ENCODE measurements at regions of chr17 and their contacts with region 1.

Region 1: DNA sequence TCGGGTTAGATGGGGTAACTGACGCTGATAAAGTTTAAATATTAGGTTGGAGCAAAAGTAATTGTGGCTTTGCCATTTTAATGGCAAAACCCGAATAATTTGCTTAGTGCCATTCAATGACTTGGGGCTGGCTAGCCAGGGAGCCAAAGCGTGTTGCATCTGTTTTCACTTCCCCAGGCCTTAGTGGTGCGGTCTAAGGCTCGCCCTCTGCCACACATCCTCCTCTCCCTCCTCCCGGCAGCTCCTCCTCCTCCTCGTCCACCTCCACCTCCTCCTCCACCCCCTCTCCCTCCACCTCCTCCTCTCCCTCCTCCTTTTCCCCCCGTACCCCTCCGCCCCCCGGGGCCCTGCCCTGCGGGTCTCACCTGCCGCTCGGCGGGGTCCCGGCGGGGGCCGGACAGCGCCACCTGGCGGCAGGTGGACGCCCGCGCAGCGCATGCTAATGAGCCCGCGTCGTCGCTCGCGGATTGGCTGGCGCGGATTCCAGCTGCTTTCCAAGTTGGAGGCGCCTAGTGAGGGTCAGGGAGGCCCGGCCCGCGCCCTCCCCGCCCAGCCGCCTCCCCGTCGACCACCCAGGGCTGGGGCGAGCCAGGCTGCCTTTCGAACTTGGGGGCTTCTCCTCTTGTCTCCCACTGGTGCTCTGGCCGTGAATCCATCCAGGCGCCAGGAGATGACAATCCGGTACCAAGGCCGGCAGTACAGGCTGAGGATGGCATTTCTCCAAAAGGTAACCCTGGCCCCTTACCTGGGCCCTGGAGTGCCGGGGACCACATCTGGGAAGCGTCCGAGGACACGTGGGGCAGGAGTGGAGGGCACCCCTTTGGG is 36.6 kb upstream of the RGS9 start:
- DNase-seq: no peak
- H3K4me3 ChIP-seq: peak overlapping the region; percentile 43
- H3K27me3 ChIP-seq: no peaks in the 10 kb centered on the region
- CTCF ChIP-seq: peak; percentile 71

Region 2: GRCh38 chr17:65056262-65056638 is 44.3 kb before region 1 on chr17:
- CTCF ChIA-PET with region 1: interaction called, 10 read pairs
- POLR2A ChIA-PET with region 1: interaction called, 3 read pairs
- DNase-seq: no peak
- H3K4me3 ChIP-seq: peak overlapping the region; percentile 98
- H3K27me3 ChIP-seq: no peaks in the 10 kb centered on the region
- CTCF ChIP-seq: no peak

Region 3: DNA sequence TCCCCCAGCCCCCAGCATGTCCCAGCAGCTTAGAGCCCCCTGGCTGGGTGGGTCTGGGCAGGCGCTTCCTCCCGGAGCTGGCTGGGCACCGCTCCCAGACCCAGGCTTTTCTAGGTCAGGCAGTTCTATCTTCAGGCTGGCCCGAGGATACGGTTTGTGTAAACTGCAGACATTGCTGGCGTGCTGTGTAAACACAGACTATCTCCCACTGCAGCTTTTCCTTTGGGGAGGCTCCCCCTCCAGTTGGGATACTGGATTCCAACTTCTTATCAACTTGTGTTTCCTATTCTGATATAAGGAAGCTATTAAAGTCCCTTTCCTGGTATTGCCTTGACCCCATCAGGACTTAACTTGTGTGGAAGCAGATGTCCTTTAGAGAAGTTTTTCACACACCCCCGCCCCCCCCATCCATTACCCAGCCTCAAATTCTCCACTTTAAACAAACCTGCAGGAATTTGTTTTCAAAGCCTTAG is 25.7 kb before region 1 on chr17:
- CTCF ChIA-PET with region 1: interaction called, 45 read pairs
- POLR2A ChIA-PET with region 1: no interaction called
- DNase-seq: no peak
- H3K4me3 ChIP-seq: no peak overlapping the region
- H3K27me3 ChIP-seq: no peaks in the 10 kb centered on the region
- CTCF ChIP-seq: 0 out of 2 replicates have a peak, but pooled peaks have one; percentile 4

Region 4: DNA sequence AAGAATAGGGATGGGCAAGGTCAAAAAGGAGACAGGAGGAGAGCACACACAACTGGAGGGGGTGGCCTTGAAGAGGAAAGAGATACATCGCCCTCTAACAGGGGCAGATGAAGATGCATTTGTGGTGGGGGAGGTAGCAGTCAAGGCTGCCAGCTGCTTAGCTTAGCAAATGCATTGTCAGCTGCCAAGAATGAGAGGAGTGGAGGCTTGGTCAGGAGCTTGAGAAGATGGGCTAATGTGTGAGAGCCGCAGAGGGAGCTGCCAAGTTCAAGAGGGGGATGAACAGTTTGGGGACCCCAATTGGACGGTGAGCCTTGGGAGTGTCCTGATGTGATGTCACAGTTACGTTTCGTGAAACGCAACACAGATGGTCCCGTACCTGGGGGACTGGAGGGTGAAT is 15.1 kb before region 1 on chr17:
- CTCF ChIA-PET with region 1: interaction called, 21 read pairs
- POLR2A ChIA-PET with region 1: no interaction called
- DNase-seq: no peak
- H3K4me3 ChIP-seq: no peak overlapping the region
- H3K27me3 ChIP-seq: peaks cover 9% of the 10 kb centered on the region
- CTCF ChIP-seq: no peak

Measured in BJ (cell line).